ENCODE measurements at regions of chr1 and their contacts with region 1.

Region 1: DNA sequence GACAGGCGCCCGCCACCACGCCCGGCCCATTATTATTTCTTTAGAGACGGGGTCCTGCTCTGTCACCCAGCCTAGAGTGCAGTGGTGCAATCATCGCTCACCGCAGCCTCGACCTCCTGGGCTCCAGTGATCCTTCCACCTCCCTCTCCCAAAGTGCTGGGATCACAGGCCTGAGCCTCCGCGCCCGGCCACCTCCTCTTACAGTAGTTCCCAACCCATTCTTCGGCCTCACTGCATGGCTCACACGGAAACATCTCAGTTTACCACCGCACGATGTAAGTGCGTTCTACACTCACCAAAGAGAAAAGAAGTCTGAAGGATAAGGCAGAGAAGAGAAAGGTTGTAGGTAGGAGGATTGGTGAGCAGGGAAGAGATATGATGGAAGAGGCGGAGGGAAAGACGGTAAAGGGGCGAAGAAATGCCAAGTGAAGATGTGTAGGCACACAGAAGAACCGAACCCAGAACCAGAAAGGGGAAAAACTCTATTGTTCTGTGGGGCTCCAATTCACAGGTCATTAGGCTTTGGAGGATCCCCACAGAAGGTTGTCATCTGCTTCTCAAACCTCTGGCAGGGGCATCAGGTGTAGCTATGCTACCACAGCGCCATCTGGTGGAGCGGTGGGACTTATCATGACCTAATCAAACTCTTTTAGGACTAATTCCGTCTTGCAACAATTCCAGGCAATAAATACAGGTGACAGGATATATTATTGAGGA is 504.2 kb downstream of the SMYD3 start:
- DNase-seq: peak; percentile 87
- H3K4me3 Mint-ChIP-seq: no peak overlapping the region
- H3K27ac Mint-ChIP-seq: no peak overlapping the region
- H3K4me1 Mint-ChIP-seq: no peaks in the 10 kb centered on the region
- H3K27me3 Mint-ChIP-seq: no peaks in the 10 kb centered on the region

Region 2: DNA sequence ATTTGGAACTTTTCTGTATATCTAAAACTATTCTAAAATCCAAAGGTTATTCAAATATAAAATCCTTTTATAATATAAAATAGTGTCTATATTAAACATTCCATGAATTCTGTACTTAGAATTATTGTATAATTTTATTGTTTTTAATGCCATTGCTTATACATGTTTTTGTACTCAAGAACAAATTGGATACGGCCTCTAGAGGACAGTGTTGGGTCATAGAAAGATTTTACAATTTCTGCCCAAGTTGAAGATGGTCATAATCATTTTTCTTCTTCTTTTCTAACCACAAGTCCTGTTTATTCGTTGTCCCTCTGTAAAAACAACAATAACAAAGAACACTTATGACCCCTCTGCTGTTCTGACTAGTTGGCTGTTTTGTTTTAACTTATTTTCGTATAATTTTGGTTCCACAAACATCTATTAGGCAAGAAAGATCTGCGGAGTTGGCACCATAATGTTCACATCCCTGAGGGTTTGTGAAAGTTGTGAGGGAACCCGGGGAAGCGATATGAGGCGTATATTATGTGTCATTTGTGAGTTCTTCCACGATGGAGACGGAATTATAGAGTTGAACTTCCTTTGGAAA is 923.8 kb before region 1 on chr1:
- CTCF ChIA-PET with region 1: no interaction called
- POLR2A ChIA-PET with region 1: no interaction called
- intact Hi-C with region 1: loop called (anchors 1 kb)
- DNase-seq: no peak
- H3K4me3 Mint-ChIP-seq: no peak overlapping the region
- H3K27ac Mint-ChIP-seq: no peak overlapping the region
- H3K4me1 Mint-ChIP-seq: no peaks in the 10 kb centered on the region
- H3K27me3 Mint-ChIP-seq: peaks cover 2% of the 10 kb centered on the region

Region 3: DNA sequence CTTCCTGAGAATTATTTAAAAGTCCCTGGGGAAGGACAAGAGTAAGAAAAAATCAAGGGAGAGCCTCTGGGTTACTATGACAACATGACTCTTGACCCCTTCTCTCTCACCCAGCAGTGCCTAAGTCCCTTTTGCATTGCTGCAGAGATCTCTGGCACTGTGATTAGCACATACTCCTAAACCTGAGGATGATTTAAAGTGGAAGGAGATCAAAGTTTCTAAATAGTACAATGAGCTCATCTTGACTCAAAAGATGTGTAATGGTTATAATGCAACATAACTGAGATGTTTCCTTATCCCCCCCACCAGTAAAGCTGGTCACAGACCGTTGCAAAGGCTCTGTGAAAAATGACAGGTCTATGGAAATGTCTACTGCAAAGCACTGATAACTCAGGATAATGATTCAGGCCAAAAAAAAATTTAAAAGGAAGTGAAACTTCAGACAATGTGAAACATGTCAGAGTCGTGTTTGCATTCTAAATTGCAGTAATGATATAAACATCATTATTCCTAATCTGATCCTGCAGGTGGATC is 328.9 kb before region 1 on chr1:
- CTCF ChIA-PET with region 1: no interaction called
- POLR2A ChIA-PET with region 1: no interaction called
- intact Hi-C with region 1: no loop called
- DNase-seq: no peak
- H3K4me3 Mint-ChIP-seq: no peak overlapping the region
- H3K27ac Mint-ChIP-seq: no peak overlapping the region
- H3K4me1 Mint-ChIP-seq: no peaks in the 10 kb centered on the region
- H3K27me3 Mint-ChIP-seq: no peaks in the 10 kb centered on the region

Region 4: GRCh38 chr1:245878585-245878984 is 124.3 kb before region 1 on chr1:
- CTCF ChIA-PET with region 1: no interaction called
- POLR2A ChIA-PET with region 1: no interaction called
- intact Hi-C with region 1: no loop called
- DNase-seq: no peak
- H3K4me3 Mint-ChIP-seq: no peak overlapping the region
- H3K27ac Mint-ChIP-seq: no peak overlapping the region
- H3K4me1 Mint-ChIP-seq: no peaks in the 10 kb centered on the region
- H3K27me3 Mint-ChIP-seq: no peaks in the 10 kb centered on the region

Region 5: GRCh38 chr1:245888809-245889208 is 114.1 kb before region 1 on chr1:
- CTCF ChIA-PET with region 1: interaction called, 10 read pairs
- POLR2A ChIA-PET with region 1: no interaction called
- intact Hi-C with region 1: loop called (anchors 1 kb)
- DNase-seq: no peak
- H3K4me3 Mint-ChIP-seq: no peak overlapping the region
- H3K27ac Mint-ChIP-seq: no peak overlapping the region
- H3K4me1 Mint-ChIP-seq: no peaks in the 10 kb centered on the region
- H3K27me3 Mint-ChIP-seq: no peaks in the 10 kb centered on the region

Region 6: GRCh38 chr1:246214708-246215509 is 212.0 kb after region 1 on chr1:
- CTCF ChIA-PET with region 1: no interaction called
- POLR2A ChIA-PET with region 1: no interaction called
- intact Hi-C with region 1: no loop called
- DNase-seq: no peak
- H3K4me3 Mint-ChIP-seq: no peak overlapping the region
- H3K27ac Mint-ChIP-seq: no peak overlapping the region
- H3K4me1 Mint-ChIP-seq: no peaks in the 10 kb centered on the region
- H3K27me3 Mint-ChIP-seq: no peaks in the 10 kb centered on the region

Measured in activated CD4-positive, alpha-beta memory T cell treated with anti-CD3 and anti-CD28 coated beads for 36 hours (primary cell).